Activated naive CD4-positive, alpha-beta T cell treated with anti-CD3 and anti-CD28 coated beads for 36 hours (primary cell): ENCODE measurements at regions of chr2 and their contacts with region 1.

Region 1: DNA sequence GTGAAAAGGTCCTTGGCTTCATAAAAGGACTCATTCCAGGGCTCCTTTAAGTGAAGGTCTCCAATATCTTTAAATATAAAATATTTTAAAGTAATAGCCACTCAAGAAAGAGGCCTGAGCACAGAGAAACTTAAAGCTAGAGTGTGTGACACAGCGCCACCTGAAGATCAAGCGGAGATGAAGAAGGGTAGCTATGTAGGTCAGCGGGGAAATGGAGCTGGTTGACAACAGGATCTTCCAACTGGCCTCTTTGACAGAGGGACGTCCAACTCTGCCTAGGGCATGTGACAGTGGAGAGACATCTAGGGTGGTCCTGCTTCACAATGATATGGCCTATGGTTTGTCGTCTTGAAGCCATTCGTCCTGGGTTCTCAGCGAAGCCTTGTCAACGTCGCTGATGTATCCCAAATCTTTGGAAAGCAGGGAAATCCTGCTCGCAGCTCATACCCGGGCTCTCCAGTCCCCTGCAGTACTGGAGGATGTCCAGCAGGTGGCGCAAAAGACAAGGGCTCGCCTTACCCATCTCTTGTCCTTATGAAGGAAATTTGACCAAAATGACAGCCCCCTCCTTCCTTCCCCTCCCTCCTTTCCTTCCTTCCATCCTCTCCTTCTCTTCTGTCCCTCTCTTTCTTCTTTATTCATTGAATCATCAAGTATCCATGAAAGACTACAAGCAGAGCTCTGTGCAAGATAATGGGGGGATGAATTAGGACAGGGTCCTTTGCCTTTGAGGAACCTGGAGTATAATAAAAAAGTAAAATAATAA is 59.6 kb downstream of the LONRF2 start:
- DNase-seq: peak; percentile 78
- H3K4me3 Mint-ChIP-seq: no peak overlapping the region
- H3K27ac Mint-ChIP-seq: no peak overlapping the region
- H3K4me1 Mint-ChIP-seq: no peaks in the 10 kb centered on the region
- H3K27me3 Mint-ChIP-seq: no peaks in the 10 kb centered on the region

Region 2: GRCh38 chr2:100242891-100243619 is 19.7 kb before region 1 on chr2:
- CTCF ChIA-PET with region 1: interaction called, 11 read pairs
- intact Hi-C with region 1: no loop called
- DNase-seq: peak; percentile 75
- H3K4me3 Mint-ChIP-seq: no peak overlapping the region
- H3K27ac Mint-ChIP-seq: no peak overlapping the region
- H3K4me1 Mint-ChIP-seq: peaks cover 2% of the 10 kb centered on the region
- H3K27me3 Mint-ChIP-seq: peaks cover 9% of the 10 kb centered on the region

Region 3: DNA sequence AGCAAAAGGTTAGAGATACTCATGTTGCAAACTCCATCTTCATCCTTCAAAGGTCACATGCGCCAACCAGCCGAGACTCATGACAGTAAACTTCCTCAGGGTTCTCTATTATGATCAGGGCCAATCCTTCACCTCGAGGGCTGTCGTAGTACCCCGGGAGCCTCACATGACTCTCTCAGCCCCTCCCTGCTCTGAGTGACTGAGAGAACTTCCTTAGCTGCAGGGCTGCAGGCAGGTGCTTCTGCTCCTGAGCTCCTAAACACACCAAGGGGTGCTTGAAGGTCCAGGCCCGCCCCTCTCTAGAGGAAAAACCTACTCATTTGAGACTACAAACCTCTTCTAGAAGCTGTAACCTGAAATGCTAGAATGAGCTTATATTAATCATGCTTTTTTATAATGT is 11.3 kb after region 1 on chr2:
- CTCF ChIA-PET with region 1: interaction called, 22 read pairs
- intact Hi-C with region 1: no loop called
- DNase-seq: no peak
- H3K4me3 Mint-ChIP-seq: no peak overlapping the region
- H3K27ac Mint-ChIP-seq: no peak overlapping the region
- H3K4me1 Mint-ChIP-seq: no peaks in the 10 kb centered on the region
- H3K27me3 Mint-ChIP-seq: peaks cover 2% of the 10 kb centered on the region

Region 4: GRCh38 chr2:100381240-100381639 is 118.5 kb after region 1 on chr2:
- CTCF ChIA-PET with region 1: interaction called, 127 read pairs
- intact Hi-C with region 1: loop called (anchors 1 kb)
- DNase-seq: peak; percentile 89
- H3K4me3 Mint-ChIP-seq: no peak overlapping the region
- H3K27ac Mint-ChIP-seq: no peak overlapping the region
- H3K4me1 Mint-ChIP-seq: no peaks in the 10 kb centered on the region
- H3K27me3 Mint-ChIP-seq: no peaks in the 10 kb centered on the region